Esophagus squamous epithelium (tissue), 5 donors: ENCODE measurements at regions of chr11 and their contacts with region 1.

Region 1: DNA sequence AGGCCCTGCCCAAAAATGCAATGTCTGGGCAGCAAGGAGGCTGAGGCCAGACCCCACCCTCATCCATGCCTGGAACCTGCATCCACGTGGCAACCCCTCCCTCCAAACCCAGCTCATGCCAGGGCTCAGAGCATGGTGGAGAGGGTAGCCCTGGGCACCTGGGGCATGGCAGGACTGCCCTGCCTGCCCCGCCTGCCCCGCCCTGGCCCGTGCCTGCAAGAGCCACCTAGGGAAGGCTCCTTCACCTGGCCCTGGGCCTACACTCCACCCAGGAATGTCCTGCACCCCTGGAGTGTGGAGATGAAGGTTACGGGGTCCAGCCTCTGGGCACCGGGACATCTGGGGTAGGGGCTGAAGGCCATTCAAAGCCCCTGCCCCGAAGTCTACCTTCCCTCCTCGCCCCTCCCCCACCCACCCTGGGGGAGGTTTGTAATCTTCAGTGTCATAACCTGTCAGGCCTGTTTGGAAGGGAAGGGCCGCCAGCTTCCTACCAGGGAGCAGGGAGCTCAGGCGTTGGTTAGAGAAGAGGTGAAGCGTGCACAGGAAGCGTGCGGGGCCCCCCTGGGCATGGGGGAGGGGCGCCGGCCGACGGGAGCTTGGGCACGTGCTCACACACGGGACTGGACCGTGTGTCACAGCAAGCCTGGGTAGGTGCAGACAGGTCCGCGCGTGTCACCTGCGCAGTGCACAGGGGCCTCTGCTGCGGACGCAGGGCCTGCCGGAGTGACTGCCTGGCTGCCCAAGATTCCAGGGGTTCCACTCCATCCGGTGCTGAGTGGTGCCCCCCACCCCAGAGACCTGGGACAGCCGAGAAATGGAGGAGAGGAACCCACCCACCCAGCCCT is 30.7 kb upstream of the TH start:
- DNase-seq: no peak
- H3K4me3 ChIP-seq: no peak overlapping the region
- H3K27ac ChIP-seq: peak overlapping the region; percentile 30 to 78 (median 68)
- H3K4me1 ChIP-seq: peaks cover 4 to 31% (median 14%) of the 10 kb centered on the region in 3 donors
- H3K27me3 ChIP-seq: peaks cover 0 to 27% (median 0%) of the 10 kb centered on the region in 4 donors
- CTCF ChIP-seq: no peak
- POLR2A ChIP-seq: no peak

Region 2: DNA sequence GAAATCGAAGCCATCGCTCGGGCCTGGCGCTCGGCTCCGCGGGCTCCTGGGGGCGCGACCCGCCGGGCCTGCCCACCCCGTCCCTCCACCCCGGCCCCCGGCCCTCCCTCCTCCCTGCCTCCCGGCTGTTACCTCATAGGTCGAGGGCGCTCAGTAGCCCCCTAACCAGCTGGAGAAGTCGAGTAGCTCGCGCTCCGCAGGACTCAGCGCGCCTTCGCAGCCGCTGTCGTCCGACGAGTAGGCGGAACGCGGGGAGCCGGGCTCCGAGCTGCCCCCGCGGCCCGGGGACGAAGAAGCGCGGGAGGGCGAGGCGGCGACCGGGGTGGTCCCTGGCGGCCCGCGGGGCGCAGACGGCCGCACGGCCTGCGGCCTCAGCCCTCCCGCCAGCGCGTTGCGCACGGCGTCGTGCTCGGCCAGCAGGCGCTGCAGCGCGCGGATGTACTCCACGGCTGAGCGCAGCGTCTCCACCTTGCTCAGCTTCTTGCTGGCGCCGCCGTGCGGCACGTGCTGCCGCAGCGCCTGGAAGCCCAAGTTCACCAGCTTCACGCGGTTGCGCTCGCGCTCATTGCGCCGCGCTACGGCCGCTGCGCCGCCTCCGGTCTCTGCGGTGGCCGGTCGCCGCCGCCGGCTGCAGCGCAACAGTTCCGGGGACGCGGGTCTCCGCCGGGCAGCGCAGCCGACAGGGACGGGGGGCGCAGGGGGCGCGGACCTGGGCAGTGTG is 67.5 kb after region 1 on chr11:
- intact Hi-C with region 1: loop called (anchors 5 kb)
- DNase-seq: no peak
- H3K4me3 ChIP-seq: peak overlapping the region; percentile 33 to 67 (median 56)
- H3K27ac ChIP-seq: peak overlapping the region; percentile 60 to 84 (median 80)
- H3K4me1 ChIP-seq: peaks cover 25 to 50% (median 32%) of the 10 kb centered on the region in 3 donors
- H3K27me3 ChIP-seq: peaks cover 0 to 82% (median 4%) of the 10 kb centered on the region in 4 donors
- CTCF ChIP-seq: peak in 5 of 6 experiments; percentile 9 to 49 (median 19)
- POLR2A ChIP-seq: no peak